ENCODE measurements at regions of chr9 and their contacts with region 1.

Region 1: GRCh38 chr9:71768388-71769174 is at the start of gene CEMIP2:
- DNase-seq: peak; percentile 76 to 94 (median 89)
- ATAC-seq: peak; percentile 81
- H3K4me3 ChIP-seq: peak within 1 kb of the TSS; percentile 94 to 96
- H3K4me3 Mint-ChIP-seq: peak within 1 kb of the TSS; percentile 91
- H3K27ac ChIP-seq: peak within 1 kb of the TSS; percentile 87 to 96
- H3K27ac Mint-ChIP-seq: peak within 1 kb of the TSS; percentile 96
- H3K4me1 ChIP-seq: peaks cover 36% of the 10 kb centered on the region
- H3K4me1 Mint-ChIP-seq: peaks cover 44% of the 10 kb centered on the region
- H3K27me3 ChIP-seq: no peaks in the 10 kb centered on the region
- H3K27me3 Mint-ChIP-seq: no peaks in the 10 kb centered on the region
- CTCF ChIP-seq: peak; percentile 63
- total RNA-seq, gene CEMIP2: 286 to 313 TPM

Region 2: GRCh38 chr9:71604197-71605063 is 164.2 kb before region 1 on chr9:
- CTCF ChIA-PET with region 1: interaction called, 9 read pairs
- POLR2A ChIA-PET with region 1: interaction called, 11 read pairs
- intact Hi-C with region 1: loop called (anchors 1 kb)
- DNase-seq: peak; percentile 57 to 88 (median 79)
- ATAC-seq: peak; percentile 66
- H3K4me3 ChIP-seq: no peak overlapping the region
- H3K4me3 Mint-ChIP-seq: no peak overlapping the region
- H3K27ac ChIP-seq: no peak overlapping the region
- H3K27ac Mint-ChIP-seq: no peak overlapping the region
- H3K4me1 ChIP-seq: no peaks in the 10 kb centered on the region
- H3K4me1 Mint-ChIP-seq: no peaks in the 10 kb centered on the region
- H3K27me3 ChIP-seq: no peaks in the 10 kb centered on the region
- H3K27me3 Mint-ChIP-seq: no peaks in the 10 kb centered on the region
- CTCF ChIP-seq: peak; percentile 81

Region 3: DNA sequence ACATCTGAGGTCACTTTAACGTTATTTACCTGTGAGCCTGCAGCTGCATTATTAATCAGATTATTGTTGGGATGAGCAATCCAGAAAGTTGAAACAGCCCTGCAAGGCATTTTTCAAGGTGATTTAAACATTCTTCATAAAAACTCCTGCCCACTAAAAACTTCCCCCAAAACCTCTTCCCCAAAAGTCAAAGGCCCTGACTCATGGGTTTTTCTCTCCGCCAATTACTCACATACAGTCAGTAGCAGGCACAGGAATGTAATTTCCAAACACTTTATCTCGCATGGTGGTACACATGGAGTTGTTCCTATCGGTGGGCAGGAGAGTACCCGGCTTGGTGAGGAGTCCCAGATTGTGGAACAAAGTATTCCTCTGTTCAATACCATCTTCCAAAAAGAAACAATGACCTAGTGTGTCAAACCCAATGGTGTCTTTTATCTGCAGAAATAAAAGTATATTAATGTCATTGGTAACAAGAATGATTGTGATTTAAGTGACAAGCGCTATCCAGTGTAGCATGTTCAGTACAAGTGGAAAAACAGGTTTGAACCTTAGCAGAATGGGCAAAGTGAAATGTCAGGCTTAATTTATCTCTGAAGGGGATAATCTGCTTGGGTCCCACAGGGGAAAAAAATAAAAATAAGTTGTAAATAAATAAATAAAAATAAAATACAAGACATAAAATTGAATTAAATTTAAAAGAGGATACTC is 38.6 kb before region 1 on chr9:
- CTCF ChIA-PET with region 1: no interaction called
- POLR2A ChIA-PET with region 1: no interaction called
- intact Hi-C with region 1: loop called in 1 of 2 experiments (anchors 5 kb)
- DNase-seq: no peak
- ATAC-seq: no peak
- H3K4me3 ChIP-seq: no peak overlapping the region
- H3K4me3 Mint-ChIP-seq: no peak overlapping the region
- H3K27ac ChIP-seq: no peak overlapping the region
- H3K27ac Mint-ChIP-seq: no peak overlapping the region
- H3K4me1 ChIP-seq: no peaks in the 10 kb centered on the region
- H3K4me1 Mint-ChIP-seq: peaks cover 1% of the 10 kb centered on the region
- H3K27me3 ChIP-seq: no peaks in the 10 kb centered on the region
- H3K27me3 Mint-ChIP-seq: no peaks in the 10 kb centered on the region
- CTCF ChIP-seq: no peak

Region 4: DNA sequence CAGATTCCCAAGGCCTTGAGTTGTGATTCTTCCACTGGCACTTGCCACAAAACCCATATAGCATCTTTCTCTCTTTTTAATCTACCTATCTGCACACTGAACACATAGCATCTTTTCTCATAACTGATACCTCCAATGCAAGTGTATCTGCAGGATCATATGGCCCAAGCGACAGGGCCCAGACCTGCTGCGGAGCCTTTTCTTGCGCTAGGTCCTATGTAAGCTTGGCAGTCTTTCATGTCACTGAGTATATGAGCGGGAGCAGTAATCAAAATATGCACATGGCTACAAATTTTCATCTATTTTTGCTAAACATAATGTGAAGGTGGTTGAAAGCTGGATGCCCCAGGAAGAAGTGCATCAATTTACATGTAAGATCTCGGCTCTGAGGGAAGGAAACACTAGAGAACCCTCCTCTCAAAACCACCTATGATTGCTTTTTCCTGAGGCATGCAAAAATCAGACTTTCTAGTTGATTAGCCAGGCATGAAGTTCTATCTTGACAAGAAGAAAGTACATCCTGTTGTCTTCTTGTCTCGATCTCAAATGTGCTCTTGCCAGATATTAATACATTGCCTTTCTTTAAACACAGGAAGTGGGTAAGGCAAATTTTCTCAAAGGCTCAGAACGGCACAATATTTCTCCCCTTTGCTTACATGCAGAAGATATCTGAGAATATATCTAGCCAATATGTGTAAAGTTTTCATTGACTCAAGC is 26.7 kb after region 1 on chr9:
- CTCF ChIA-PET with region 1: interaction called, 15 read pairs
- POLR2A ChIA-PET with region 1: interaction called, 20 read pairs
- intact Hi-C with region 1: no loop called
- DNase-seq: peak in 3 of 9 experiments; percentile 27 to 83 (median 64)
- ATAC-seq: peak; percentile 86
- H3K4me3 ChIP-seq: peak overlapping the region in 1 of 2 experiments; percentile 17
- H3K4me3 Mint-ChIP-seq: peak overlapping the region; percentile 53
- H3K27ac ChIP-seq: peak overlapping the region; percentile 52 to 82
- H3K27ac Mint-ChIP-seq: peak overlapping the region; percentile 96
- H3K4me1 ChIP-seq: peaks cover 58% of the 10 kb centered on the region
- H3K4me1 Mint-ChIP-seq: peaks cover 70% of the 10 kb centered on the region
- H3K27me3 ChIP-seq: no peaks in the 10 kb centered on the region
- H3K27me3 Mint-ChIP-seq: no peaks in the 10 kb centered on the region
- CTCF ChIP-seq: no peak

Region 5: GRCh38 chr9:71819115-71819739 is 50.6 kb after region 1 on chr9:
- CTCF ChIA-PET with region 1: interaction called, 88 read pairs
- POLR2A ChIA-PET with region 1: interaction called, 5 read pairs
- intact Hi-C with region 1: loop called (anchors 1 to 5 kb)
- DNase-seq: peak in 8 of 9 experiments; percentile 32 to 71 (median 60)
- ATAC-seq: no peak
- H3K4me3 ChIP-seq: no peak overlapping the region
- H3K4me3 Mint-ChIP-seq: no peak overlapping the region
- H3K27ac ChIP-seq: no peak overlapping the region
- H3K27ac Mint-ChIP-seq: no peak overlapping the region
- H3K4me1 ChIP-seq: peaks cover 12% of the 10 kb centered on the region
- H3K4me1 Mint-ChIP-seq: peaks cover 20% of the 10 kb centered on the region
- H3K27me3 ChIP-seq: no peaks in the 10 kb centered on the region
- H3K27me3 Mint-ChIP-seq: no peaks in the 10 kb centered on the region
- CTCF ChIP-seq: peak; percentile 88

Region 6: DNA sequence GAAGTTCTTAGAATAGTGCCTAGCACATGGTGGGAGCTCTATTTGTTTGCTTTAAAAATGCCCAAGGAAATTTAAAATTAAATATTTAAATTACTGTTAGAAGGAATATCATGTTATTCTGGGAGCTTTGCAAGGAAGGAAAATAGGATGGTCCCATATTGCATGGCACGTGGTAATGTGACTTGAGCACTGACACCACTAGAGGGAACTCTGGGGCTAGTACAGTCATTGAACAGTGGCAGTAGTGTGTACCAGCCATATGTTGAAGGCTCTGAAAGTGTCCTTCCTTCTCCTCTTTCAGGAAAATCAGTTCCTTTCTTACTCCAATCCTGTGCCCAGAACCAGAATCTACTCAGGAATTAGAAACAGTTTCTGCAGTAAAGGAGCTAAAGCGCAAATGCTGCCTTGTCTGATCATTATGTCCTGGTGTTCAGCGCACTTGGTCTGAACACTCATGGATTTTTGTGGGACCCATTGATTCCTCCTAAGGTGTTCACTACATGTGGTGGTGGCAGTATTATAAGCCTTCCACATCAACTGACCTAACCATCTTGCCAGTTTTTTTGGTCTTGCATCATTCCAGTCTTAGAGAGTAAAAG is 434.7 kb after region 1 on chr9:
- CTCF ChIA-PET with region 1: no interaction called
- POLR2A ChIA-PET with region 1: no interaction called
- intact Hi-C with region 1: no loop called
- DNase-seq: peak in 1 of 9 experiments; percentile 3
- ATAC-seq: no peak
- H3K4me3 ChIP-seq: no peak overlapping the region
- H3K4me3 Mint-ChIP-seq: no peak overlapping the region
- H3K27ac ChIP-seq: no peak overlapping the region
- H3K27ac Mint-ChIP-seq: no peak overlapping the region
- H3K4me1 ChIP-seq: no peaks in the 10 kb centered on the region
- H3K4me1 Mint-ChIP-seq: no peaks in the 10 kb centered on the region
- H3K27me3 ChIP-seq: peaks cover 0 to 2% of the 10 kb centered on the region in 2 experiments
- H3K27me3 Mint-ChIP-seq: peaks cover 9% of the 10 kb centered on the region
- CTCF ChIP-seq: no peak

Region 7: DNA sequence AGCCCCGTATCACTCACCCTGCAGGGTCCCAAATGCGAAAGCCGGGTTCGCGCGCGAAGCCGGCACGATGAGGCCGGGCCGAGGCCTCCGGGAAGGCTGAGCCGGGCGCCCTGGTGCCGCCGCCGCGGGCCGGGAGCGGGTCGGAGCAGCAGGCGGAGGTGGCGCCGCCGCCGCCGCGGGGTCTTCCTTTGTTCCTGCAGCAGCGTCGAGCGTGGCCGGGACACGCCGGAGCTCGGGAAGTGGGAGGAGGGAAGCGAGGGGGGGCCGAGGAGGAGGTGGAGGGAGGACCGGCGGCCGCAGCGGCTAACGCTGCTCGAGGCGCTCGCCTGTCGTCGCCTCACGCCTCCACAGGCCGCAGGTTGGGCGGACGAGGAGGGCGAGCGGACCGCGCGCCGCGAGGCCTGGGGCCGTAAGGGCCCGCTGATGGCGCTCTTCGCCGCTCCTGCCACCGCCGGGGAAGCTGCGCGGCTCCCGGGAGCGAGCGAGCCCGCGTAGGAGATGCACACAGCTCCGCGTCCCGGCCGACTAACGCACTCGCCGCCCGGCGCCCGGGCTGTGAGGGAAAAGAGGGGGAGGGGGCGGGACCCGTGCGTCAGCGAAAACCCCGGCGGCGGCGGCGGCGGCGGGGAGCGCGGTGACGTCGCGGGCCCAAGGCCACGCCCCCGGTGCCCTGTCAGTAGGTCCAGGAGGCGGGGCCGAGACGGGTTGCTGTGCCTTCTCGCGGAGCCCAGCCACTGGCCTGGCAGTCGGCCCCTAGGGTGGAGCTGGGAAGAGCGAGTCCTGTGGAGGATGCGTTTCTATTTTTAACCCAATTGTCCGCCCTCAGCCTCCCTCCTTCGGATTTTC is 596.3 kb after region 1 on chr9 and contains the start of gene ZFAND5:
- CTCF ChIA-PET with region 1: no interaction called
- POLR2A ChIA-PET with region 1: interaction called, 4 read pairs
- intact Hi-C with region 1: loop called (anchors 5 to 10 kb)
- DNase-seq: peak; percentile 86 to 98 (median 94)
- ATAC-seq: peak; percentile 79
- H3K4me3 ChIP-seq: peak within 1 kb of the TSS; percentile 74 to 88
- H3K4me3 Mint-ChIP-seq: peak within 1 kb of the TSS; percentile 91
- H3K27ac ChIP-seq: peak within 1 kb of the TSS; percentile 95 to 97
- H3K27ac Mint-ChIP-seq: peak within 1 kb of the TSS; percentile 98
- H3K4me1 ChIP-seq: peaks cover 41% of the 10 kb centered on the region
- H3K4me1 Mint-ChIP-seq: peaks cover 41% of the 10 kb centered on the region
- H3K27me3 ChIP-seq: no peaks in the 10 kb centered on the region
- H3K27me3 Mint-ChIP-seq: no peaks in the 10 kb centered on the region
- CTCF ChIP-seq: no peak
- total RNA-seq, gene ZFAND5: 355 to 361 TPM

Measured in CD8-positive, alpha-beta T cell (primary cell).